ENCODE measurements at regions of chrX and their contacts with region 1.

Region 1: GRCh38 chrX:101287402-101287801 is 3.7 kb downstream of the TAF7L start:
- DNase-seq: peak; percentile 10
- ATAC-seq: peak; percentile 49; the same call in 1 of the 2 replicates
- H3K4me3 ChIP-seq: no peak overlapping the region
- H3K27ac ChIP-seq: no peak overlapping the region
- H3K4me1 ChIP-seq: no peaks in the 10 kb centered on the region
- H3K27me3 ChIP-seq: no peaks in the 10 kb centered on the region
- CTCF ChIP-seq: peak; percentile 28 to 42 (median 36); a peak in 5 of 6 replicates
- POLR2A ChIP-seq: no peak
- RAD21 ChIP-seq: peak; percentile 52

Region 2: DNA sequence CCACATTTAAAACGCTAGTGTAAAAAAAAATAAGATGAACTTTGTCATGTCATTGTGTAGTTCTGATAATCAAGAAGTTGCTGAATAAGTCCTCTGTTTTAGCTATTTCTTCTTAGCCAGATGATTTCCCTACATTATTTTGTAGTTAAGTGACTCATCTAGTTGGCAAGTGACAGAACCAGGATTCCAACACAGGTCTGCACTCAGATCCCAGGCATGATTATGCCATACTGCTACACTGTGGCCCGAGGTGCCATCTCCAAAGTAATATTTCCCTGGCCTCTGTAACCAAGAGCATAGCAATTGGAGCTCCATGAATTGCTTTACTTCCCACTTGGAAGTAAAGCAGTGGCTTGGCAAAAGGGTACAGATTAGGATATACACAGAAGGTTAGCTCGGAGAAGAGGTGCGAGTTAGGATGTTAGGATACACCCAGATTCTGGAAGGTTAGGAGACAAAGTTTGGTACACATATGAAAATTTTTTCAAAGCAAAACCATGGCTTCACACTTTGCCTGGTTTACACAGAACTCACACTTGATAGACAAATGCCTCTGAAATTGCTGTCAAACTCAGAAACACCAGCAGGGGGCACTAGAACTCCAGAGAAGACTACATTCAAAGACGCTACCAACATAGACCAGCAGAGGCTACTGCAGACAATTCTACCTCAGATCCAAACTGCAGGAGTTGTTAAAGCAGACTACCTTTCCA is 602.0 kb before region 1 on chrX:
- CTCF ChIA-PET with region 1: no interaction called
- POLR2A ChIA-PET with region 1: no interaction called
- RAD21 ChIA-PET with region 1: no interaction called
- intact Hi-C with region 1: loop called (anchors 10 kb)
- DNase-seq: peak; percentile 56
- ATAC-seq: peak; percentile 84
- H3K4me3 ChIP-seq: no peak overlapping the region
- H3K27ac ChIP-seq: no peak overlapping the region
- H3K4me1 ChIP-seq: no peaks in the 10 kb centered on the region
- H3K27me3 ChIP-seq: no peaks in the 10 kb centered on the region
- CTCF ChIP-seq: peak; percentile 72 to 98 (median 76)
- POLR2A ChIP-seq: no peak
- RAD21 ChIP-seq: peak; percentile 81

Region 3: DNA sequence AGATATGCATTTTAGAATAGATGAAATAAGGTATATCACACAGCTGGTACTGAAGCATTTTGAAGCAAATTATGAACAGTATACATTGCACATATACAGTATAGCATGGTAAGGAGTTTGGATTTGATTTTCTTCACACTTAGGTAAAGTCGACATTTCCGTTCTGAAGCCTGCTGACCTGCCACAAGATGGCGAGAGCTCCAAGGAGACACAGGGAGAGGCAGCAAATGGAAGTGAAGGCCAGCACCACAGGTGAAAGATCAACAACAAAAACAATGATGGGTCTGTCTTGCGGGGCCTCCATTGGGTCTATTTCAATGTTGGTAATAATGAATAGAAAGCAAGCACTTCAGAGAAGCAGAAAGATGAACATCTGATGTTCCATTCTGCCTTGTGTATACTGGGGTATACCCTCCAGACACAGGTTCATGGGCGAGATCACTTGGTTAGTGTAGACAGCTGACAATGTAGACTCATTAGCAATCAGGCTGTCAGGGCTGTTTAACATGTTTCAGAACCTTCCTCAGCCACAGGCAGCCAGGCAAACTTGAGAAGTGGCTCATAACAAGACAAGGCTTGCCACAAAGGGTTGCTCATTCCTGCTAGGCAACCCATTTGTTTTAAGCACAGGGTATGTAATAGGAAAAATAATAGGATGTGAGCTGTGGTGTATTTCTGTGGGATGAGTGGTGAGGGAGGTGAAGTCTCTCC is 391.9 kb before region 1 on chrX:
- CTCF ChIA-PET with region 1: no interaction called
- POLR2A ChIA-PET with region 1: no interaction called
- RAD21 ChIA-PET with region 1: interaction called in 1 of 2 experiments, 3 read pairs
- intact Hi-C with region 1: loop called (anchors 2 kb)
- DNase-seq: peak; percentile 26
- ATAC-seq: peak; percentile 86
- H3K4me3 ChIP-seq: no peak overlapping the region
- H3K27ac ChIP-seq: no peak overlapping the region
- H3K4me1 ChIP-seq: no peaks in the 10 kb centered on the region
- H3K27me3 ChIP-seq: no peaks in the 10 kb centered on the region
- CTCF ChIP-seq: peak; percentile 50 to 62 (median 53)
- POLR2A ChIP-seq: no peak
- RAD21 ChIP-seq: peak; percentile 85

Region 4: DNA sequence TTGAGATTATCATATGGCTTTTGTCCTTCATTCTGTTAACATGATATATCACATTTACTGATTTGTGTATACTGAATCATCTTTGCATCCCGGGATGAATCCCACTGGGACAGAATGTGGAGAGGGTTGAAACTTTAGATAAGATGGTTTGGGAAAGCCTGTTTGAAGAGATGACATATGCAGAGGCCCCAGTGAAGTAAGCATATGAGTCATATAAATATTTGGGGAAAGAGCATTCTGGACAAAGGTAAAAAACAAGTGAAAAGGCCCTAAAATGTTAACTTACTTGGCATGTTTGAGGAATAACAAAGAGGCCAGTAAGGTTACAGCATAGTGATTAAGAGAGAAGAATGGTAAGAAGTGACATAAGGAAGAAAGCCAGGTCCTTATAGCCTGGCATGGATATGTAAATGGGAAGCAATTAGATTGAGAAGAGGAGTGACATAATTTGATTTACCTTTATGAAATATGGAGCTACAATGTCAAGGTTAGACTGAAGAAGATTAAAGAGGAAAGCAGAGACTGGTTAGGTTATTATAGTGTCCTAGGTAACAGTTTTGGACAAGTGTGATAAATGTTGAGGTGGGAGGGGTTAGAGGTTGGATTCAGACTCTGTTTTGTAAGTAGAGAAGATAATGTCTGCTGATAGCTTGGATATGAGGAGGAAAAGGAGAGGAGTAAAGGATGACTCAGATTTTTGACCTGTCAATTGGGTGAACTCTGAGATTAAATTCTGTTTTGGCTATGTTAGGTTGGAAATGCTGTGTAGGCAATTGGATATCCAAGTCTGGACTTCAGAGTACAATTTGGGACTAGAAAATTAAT is 122.4 kb before region 1 on chrX:
- CTCF ChIA-PET with region 1: no interaction called
- POLR2A ChIA-PET with region 1: no interaction called
- RAD21 ChIA-PET with region 1: no interaction called
- intact Hi-C with region 1: no loop called
- DNase-seq: no peak
- ATAC-seq: no peak
- H3K4me3 ChIP-seq: no peak overlapping the region
- H3K27ac ChIP-seq: no peak overlapping the region
- H3K4me1 ChIP-seq: no peaks in the 10 kb centered on the region
- H3K27me3 ChIP-seq: no peaks in the 10 kb centered on the region
- CTCF ChIP-seq: no peak
- POLR2A ChIP-seq: no peak
- RAD21 ChIP-seq: no peak

Measured in HCT116 (cell line).